ENCODE measurements at regions of chr19 and their contacts with region 1.

Region 1: GRCh38 chr19:6372594-6373095 is at the start of gene ALKBH7:
- DNase-seq: peak; percentile 82 to 99 (median 98)
- ATAC-seq: peak; percentile 83
- H3K4me3 ChIP-seq: peak within 1 kb of the TSS; percentile 89
- H3K4me3 Mint-ChIP-seq: peak within 1 kb of the TSS; percentile 82 to 92 (median 88)
- H3K27ac ChIP-seq: peak within 1 kb of the TSS; percentile 88
- H3K27ac Mint-ChIP-seq: peak within 1 kb of the TSS; percentile 66 to 95 (median 92)
- H3K4me1 ChIP-seq: peaks cover 5 to 10% of the 10 kb centered on the region in 2 donors
- H3K4me1 Mint-ChIP-seq: peaks cover 9 to 23% (median 13%) of the 10 kb centered on the region in 7 donors
- H3K27me3 ChIP-seq: no peaks in the 10 kb centered on the region
- H3K27me3 Mint-ChIP-seq: no peaks in the 10 kb centered on the region
- total RNA-seq, gene ALKBH7: 33.6 to 90.1 (median 72.9) TPM

Region 2: GRCh38 chr19:5680437-5681368 is 691.9 kb before region 1 on chr19 and contains the starts of genes HSD11B1L and MICOS13:
- CTCF ChIA-PET with region 1: no interaction called
- POLR2A ChIA-PET with region 1: no interaction called
- intact Hi-C with region 1: loop called (anchors 5 kb)
- DNase-seq: peak; percentile 98 to 99 (median 99)
- ATAC-seq: peak; percentile 96
- H3K4me3 ChIP-seq: peak within 1 kb of the TSS; percentile 100
- H3K4me3 Mint-ChIP-seq: peak within 1 kb of the TSS; percentile 85 to 97 (median 94)
- H3K27ac ChIP-seq: peak within 1 kb of the TSS; percentile 98
- H3K27ac Mint-ChIP-seq: peak within 1 kb of the TSS; percentile 94 to 100 (median 97)
- H3K4me1 ChIP-seq: peaks cover 8 to 18% of the 10 kb centered on the region in 2 donors
- H3K4me1 Mint-ChIP-seq: peaks cover 20 to 33% (median 25%) of the 10 kb centered on the region in 7 donors
- H3K27me3 ChIP-seq: no peaks in the 10 kb centered on the region
- H3K27me3 Mint-ChIP-seq: peaks cover 0 to 18% (median 0%) of the 10 kb centered on the region in 5 donors
- total RNA-seq, gene HSD11B1L: 2.8 to 5.2 (median 3.6) TPM
- total RNA-seq, gene MICOS13: 26.1 to 49.3 (median 38.4) TPM

Region 3: GRCh38 chr19:6110360-6110977 is 262.2 kb before region 1 on chr19 and contains the start of gene RFX2:
- CTCF ChIA-PET with region 1: no interaction called
- POLR2A ChIA-PET with region 1: no interaction called
- intact Hi-C with region 1: loop called in 1 of 2 experiments (anchors 1 kb)
- DNase-seq: peak; percentile 97 to 100 (median 99)
- ATAC-seq: peak; percentile 99
- H3K4me3 ChIP-seq: peak within 1 kb of the TSS; percentile 60
- H3K4me3 Mint-ChIP-seq: peak within 1 kb of the TSS; percentile 84 to 98 (median 92)
- H3K27ac ChIP-seq: peak within 1 kb of the TSS; percentile 64
- H3K27ac Mint-ChIP-seq: peak within 1 kb of the TSS; percentile 71 to 92 (median 88)
- H3K4me1 ChIP-seq: peaks cover 8 to 10% of the 10 kb centered on the region in 2 donors
- H3K4me1 Mint-ChIP-seq: peaks cover 21 to 27% (median 25%) of the 10 kb centered on the region in 7 donors
- H3K27me3 ChIP-seq: peaks cover 0 to 4% of the 10 kb centered on the region in 2 donors
- H3K27me3 Mint-ChIP-seq: peaks cover 0 to 19% (median 4%) of the 10 kb centered on the region in 5 donors
- total RNA-seq, gene RFX2: 4.0 to 18.4 (median 8.4) TPM

Region 4: DNA sequence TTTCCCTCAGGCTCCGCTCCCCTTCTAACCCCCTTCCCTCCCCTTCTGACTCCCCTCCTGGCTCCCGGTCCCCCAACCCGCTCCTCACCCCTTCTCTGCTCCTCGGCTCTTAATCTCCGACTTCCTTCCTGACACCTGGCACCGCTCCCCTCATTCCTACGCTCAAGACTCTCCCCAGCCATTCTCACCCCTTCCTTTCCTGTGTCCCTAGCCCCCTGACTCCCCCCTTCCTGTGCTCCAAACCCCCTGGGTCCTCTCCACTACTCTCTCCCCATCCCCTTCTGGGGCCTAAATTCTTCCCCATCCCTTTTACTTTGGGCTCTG is 10.7 kb before region 1 on chr19:
- CTCF ChIA-PET with region 1: interaction called, 9 read pairs
- POLR2A ChIA-PET with region 1: interaction called, 85 read pairs
- intact Hi-C with region 1: loop called (anchors 1 kb)
- DNase-seq: no peak
- ATAC-seq: no peak
- H3K4me3 ChIP-seq: peak overlapping the region; percentile 76
- H3K4me3 Mint-ChIP-seq: peak overlapping the region; percentile 83 to 100 (median 97)
- H3K27ac ChIP-seq: peak overlapping the region; percentile 82
- H3K27ac Mint-ChIP-seq: peak overlapping the region; percentile 87 to 98 (median 96)
- H3K4me1 ChIP-seq: peaks cover 10 to 13% of the 10 kb centered on the region in 2 donors
- H3K4me1 Mint-ChIP-seq: peaks cover 10 to 37% (median 22%) of the 10 kb centered on the region in 7 donors
- H3K27me3 ChIP-seq: no peaks in the 10 kb centered on the region
- H3K27me3 Mint-ChIP-seq: no peaks in the 10 kb centered on the region

Region 5: GRCh38 chr19:6460101-6460853 is 87.6 kb after region 1 on chr19:
- CTCF ChIA-PET with region 1: no interaction called
- POLR2A ChIA-PET with region 1: interaction called, 3 read pairs
- intact Hi-C with region 1: loop called (anchors 1 kb)
- DNase-seq: peak; percentile 87 to 97 (median 96)
- ATAC-seq: peak; percentile 90
- H3K4me3 ChIP-seq: peak overlapping the region; percentile 72
- H3K4me3 Mint-ChIP-seq: peak overlapping the region; percentile 92 to 99 (median 98)
- H3K27ac ChIP-seq: peak overlapping the region; percentile 83
- H3K27ac Mint-ChIP-seq: peak overlapping the region; percentile 83 to 96 (median 91)
- H3K4me1 ChIP-seq: peaks cover 0 to 4% of the 10 kb centered on the region in 2 donors
- H3K4me1 Mint-ChIP-seq: peaks cover 11 to 40% (median 34%) of the 10 kb centered on the region in 7 donors
- H3K27me3 ChIP-seq: no peaks in the 10 kb centered on the region
- H3K27me3 Mint-ChIP-seq: peaks cover 0 to 8% (median 0%) of the 10 kb centered on the region in 5 donors

Region 6: DNA sequence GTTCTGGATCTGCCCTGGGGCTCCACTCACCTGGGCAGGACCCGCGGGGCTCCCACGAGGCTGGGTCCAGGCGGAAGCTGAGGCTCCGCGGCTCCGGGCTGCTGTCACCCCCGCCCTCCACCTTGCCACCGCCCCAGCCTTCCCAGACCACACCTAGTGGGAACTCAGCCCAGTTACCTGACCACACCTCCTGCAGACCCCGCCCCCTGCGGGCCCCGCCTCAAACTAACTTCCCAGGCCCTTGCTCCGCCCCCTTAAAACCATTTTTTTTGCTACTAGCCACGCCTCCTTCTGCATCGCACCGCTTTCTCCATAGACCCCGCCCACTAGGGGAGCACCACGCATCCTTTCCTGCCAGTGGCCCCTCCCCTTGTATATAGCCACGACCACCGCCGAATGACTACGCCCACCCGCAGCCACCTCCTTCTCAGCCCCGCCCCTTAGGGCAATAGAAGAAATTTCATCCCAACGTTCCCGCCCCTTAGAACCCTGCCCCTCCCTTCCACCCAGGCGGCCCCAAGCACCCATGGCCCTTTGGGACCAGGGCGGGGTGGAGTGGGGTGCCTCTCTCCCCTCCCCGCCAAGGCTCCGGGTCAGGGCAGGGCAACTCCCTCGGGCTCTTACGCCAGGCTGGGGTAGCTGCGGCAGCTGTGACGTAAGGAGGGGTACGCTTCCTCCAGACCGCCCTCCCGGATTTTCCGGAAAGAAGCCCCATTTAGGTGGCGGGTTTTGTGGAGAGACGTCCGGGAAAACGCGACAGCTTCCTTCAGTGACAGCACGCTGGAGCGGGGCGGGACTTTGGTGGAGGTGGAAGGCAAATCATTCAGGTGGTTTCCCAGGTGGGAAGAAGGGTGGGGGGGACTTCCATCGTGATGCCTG is 395.0 kb after region 1 on chr19 and contains the start of gene SH2D3A:
- CTCF ChIA-PET with region 1: no interaction called
- POLR2A ChIA-PET with region 1: no interaction called
- intact Hi-C with region 1: loop called (anchors 1 to 2 kb)
- DNase-seq: peak; percentile 80 to 98 (median 97)
- ATAC-seq: peak; percentile 84
- H3K4me3 ChIP-seq: peak within 1 kb of the TSS; percentile 82
- H3K4me3 Mint-ChIP-seq: peak within 1 kb of the TSS; percentile 88 to 99 (median 94)
- H3K27ac ChIP-seq: peak within 1 kb of the TSS; percentile 91
- H3K27ac Mint-ChIP-seq: peak within 1 kb of the TSS; percentile 89 to 98 (median 95)
- H3K4me1 ChIP-seq: peaks cover 24 to 41% of the 10 kb centered on the region in 2 donors
- H3K4me1 Mint-ChIP-seq: peaks cover 28 to 65% (median 55%) of the 10 kb centered on the region in 7 donors
- H3K27me3 ChIP-seq: no peaks in the 10 kb centered on the region
- H3K27me3 Mint-ChIP-seq: no peaks in the 10 kb centered on the region
- total RNA-seq, gene SH2D3A: 27.9 to 64.7 (median 57.4) TPM

Measured in naive thymus-derived CD4-positive, alpha-beta T cell (primary cell).